HEK293T (cell line): ENCODE measurements at regions of chr17 and their contacts with region 1.

Region 1: DNA sequence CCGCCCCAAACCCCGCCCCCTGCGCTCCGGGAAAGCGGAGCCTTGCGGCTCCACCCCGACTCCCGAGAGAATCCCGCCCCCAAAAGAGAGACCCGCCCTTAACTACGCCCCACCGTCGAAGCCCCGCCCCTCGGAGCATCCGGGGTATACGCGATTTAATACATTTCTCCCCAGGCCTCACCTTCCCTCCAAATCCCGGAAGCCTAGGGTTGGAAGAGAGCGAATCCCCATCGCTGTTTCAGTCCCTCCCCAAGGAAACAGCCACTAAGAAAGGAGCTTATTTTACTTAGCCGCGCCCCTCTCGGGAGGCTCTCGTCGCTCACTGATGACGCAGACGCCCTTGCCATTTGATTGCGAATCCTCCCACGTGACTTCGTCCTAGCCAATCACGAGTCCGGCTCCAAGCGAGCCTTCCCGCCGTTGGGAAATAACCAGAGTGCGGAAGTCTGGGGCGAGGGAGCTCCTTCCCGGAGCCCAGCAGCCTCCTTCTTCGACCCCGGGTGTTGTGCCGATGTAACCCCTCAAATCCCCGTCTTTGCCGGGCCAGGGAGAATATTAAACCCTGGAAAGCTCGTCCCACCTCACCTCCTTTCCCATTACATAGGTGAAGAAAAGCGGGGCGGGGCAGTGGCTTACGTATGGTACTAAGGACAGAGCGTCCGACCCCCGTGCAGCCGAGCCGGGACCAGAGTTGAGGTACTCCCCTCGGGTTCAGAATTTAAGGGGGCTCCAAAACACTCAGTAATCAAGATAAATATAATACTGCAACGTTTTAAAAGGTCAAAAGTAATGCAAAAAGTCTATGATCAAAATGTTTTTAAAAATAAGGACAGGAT is 462 bp upstream of the FDXR start:
- DNase-seq: peak; percentile 99

Region 2: GRCh38 chr17:74467221-74467951 is 405.9 kb before region 1 on chr17:
- CTCF ChIA-PET with region 1: no interaction called
- POLR2A ChIA-PET with region 1: no interaction called
- DNase-seq: no peak

Region 3: GRCh38 chr17:74776044-74776977 is 96.9 kb before region 1 on chr17 and contains the start of gene NAT9:
- CTCF ChIA-PET with region 1: no interaction called
- POLR2A ChIA-PET with region 1: interaction called, 14 read pairs
- DNase-seq: peak; percentile 100

Region 4: DNA sequence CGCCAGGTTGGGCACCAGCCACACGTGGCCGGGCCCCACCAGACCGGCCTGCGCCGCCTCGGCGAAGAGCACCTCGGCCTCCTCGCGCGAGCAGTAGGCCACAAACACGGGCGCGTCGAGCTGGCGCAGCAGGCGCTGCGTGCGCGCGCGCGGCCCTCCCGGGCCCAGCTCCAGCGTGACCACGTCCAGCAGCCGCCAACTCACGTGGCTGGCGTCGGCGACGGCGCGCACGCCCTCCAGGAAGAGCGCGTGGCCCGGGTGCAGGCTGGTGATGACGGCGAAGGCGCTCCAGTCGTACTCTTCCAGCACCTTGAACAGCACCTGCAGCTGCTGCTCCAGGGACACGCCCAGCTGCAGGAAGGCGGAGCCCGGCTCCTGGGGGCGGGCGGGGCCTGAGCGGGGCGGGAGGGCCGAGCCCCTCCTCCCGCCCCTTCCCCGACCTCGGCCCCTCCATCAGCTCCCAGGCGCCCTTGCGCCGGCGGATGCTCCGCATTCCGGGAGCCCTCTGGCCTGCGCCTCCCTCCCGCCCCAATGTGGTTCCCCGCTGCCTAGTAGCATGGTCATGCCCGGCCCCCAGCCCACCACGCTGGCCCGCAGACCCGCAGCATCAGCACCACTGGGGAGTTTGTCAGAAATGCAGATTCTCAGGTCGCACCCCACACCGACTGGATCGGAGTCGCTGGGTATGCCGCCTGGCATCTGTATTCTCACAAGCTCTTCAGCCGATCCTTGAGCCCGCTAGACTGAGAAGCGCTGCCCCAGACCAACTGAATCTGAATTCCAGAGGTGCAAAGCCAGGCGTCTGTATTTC is 20.8 kb before region 1 on chr17:
- CTCF ChIA-PET with region 1: no interaction called
- POLR2A ChIA-PET with region 1: interaction called, 26 read pairs
- DNase-seq: peak; percentile 84

Region 5: GRCh38 chr17:74898376-74898946 is 25.2 kb after region 1 on chr17:
- CTCF ChIA-PET with region 1: interaction called, 3 read pairs
- POLR2A ChIA-PET with region 1: interaction called, 36 read pairs
- DNase-seq: no peak

Region 6: DNA sequence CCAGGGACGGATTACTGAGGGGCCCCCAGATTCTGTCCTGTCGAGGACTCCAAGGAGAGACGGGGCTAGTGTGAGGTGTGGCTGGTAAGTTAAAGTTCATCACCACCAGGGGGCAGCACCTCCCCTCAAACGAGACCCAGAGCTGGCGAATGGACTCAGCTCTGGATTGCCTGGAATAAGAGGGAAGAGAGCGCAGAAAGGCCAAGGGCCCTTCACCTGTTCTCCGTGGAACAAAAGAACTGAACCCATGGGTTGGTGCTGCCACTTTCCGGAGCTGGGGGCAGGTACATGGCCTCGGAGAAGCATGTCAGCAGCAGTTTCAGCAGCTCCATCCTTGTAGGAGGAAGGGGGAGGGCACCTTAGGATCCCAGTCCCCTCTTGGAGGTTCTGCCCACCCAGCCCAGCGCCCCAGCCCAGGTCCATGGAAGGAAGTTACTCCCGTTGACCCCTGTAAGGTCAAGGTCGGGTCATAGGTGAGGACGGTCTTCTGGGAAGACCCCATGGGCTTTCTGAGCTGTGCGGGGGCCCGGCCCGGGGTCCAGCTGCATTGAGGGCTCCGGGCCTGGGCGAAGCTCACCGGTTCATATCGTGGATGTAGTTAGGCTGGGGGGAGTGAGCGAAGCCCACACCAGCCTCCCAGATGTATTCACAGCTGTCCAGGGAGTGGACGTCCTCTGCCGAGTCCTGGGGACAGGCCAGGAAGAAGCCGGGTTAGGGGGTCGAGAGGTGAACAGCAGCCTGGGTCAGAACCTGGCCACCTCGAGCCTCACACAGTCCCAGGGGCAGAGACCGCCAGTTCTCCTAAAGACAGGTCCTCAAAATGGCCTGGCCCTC is 88.6 kb after region 1 on chr17:
- CTCF ChIA-PET with region 1: interaction called, 8 read pairs
- POLR2A ChIA-PET with region 1: interaction called, 10 read pairs
- DNase-seq: peak; percentile 90

Region 7: DNA sequence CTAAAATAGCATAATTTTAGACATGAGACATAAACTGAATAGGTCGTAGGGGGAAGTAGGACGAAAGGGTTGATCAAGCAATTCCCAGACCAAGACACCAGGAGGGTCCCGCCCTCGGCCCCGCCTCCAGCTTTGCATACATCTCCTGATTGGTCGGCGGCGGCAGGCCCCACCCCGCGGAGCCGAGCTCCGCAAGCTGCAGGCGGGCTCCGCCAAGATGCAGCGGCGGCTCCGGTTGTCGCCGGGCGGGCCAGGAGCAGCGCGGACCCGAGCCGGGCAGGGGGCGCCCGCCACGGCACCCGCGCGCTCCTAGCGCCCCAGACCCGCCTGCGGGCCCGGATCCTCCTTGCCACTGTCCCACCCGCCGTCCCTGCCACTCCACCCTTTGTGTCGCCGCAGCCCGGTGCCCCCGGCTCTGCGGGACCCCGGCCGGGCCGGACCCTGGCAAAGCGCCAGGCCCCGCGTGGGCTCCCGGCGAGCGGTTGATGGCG is 114.2 kb after region 1 on chr17 and contains the start of gene CDR2L:
- CTCF ChIA-PET with region 1: no interaction called
- POLR2A ChIA-PET with region 1: interaction called, 12 read pairs
- DNase-seq: peak; percentile 97

Region 8: DNA sequence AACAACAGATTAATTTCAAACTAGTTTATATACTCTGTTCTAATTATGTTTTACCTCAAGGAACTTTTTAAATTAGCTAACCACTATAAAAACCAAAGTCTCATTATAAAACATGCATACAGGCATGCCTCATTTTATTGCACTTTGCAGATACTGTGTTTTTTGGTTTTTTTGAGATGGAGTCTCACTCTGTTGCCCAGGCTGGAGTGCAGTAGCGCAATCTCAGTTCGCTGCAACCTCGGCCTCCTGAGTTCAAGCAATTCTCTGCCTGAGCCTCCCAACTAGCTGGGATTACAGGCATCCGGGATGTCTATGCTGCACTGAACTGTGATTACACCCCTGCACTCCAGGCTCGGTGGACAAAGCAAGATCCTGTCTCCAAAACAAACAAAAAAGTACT is 289.8 kb after region 1 on chr17:
- CTCF ChIA-PET with region 1: no interaction called
- POLR2A ChIA-PET with region 1: no interaction called
- DNase-seq: no peak